ENCODE measurements at regions of chr21 and their contacts with region 1.

Region 1: GRCh38 chr21:29104239-29104708 is 26.2 kb upstream of the MAP3K7CL start:
- DNase-seq: peak; percentile 34
- CTCF ChIP-seq: no peak

Region 2: GRCh38 chr21:29091032-29091431 is 13.2 kb before region 1 on chr21:
- CTCF ChIA-PET with region 1: interaction called, 20 read pairs
- POLR2A ChIA-PET with region 1: no interaction called
- DNase-seq: no peak
- CTCF ChIP-seq: no peak

Region 3: GRCh38 chr21:29114765-29115164 is 10.5 kb after region 1 on chr21:
- CTCF ChIA-PET with region 1: interaction called, 30 read pairs
- POLR2A ChIA-PET with region 1: no interaction called
- DNase-seq: no peak
- CTCF ChIP-seq: no peak

Measured in GM10248 (cell line).